Mucosa of descending colon (tissue), 3 donors: ENCODE measurements at regions of chr1 and their contacts with region 1.

Region 1: DNA sequence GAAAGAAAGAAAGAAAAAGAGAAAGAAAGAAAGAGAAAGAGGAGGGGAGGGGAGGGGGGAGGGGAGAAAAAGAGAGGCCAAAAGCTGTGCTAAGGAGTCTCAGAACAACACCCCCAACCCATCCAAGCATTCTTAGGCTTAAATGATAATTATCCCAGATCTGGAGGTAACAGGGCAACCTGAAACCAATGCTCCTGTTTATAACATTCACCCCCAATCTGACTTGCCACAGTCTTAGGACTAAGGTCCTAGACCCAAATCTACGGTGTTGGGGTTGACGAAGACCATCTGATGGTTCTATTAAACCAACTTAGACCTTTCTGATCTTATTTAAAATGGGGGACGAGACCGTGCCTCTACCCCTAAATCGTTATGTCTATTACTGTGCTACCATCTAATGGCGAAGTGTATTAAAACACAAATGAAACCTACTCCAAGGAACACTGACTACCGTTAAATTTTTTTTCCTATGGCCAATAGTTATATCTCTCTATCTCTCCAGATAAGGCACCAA is 119.3 kb upstream of the CDC42BPA start:
- DNase-seq: no peak
- ATAC-seq: peak; percentile 66
- H3K4me3 ChIP-seq: no peak overlapping the region
- H3K4me1 ChIP-seq: no peaks in the 10 kb centered on the region
- CTCF ChIP-seq: no peak

Region 2: DNA sequence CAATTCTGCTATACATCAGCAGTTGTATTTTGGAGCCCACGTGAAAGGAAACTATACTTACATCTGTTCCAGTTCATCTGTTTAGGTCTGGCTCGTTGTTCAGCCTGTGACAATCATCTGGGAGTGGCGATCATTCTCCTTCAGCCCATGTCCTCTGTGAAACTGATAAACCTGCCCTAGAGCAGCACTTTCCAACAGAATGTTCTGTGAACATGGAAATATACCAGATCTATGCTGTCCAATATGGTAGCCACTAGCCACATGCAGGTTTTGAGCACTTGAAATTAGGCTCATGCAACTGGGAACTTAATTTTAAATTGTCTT is 521.9 kb before region 1 on chr1:
- intact Hi-C with region 1: loop called in 1 of 2 experiments (anchors 5 kb)
- DNase-seq: no peak
- ATAC-seq: peak; percentile 22
- H3K4me3 ChIP-seq: no peak overlapping the region
- H3K4me1 ChIP-seq: peaks cover 4% of the 10 kb centered on the region
- CTCF ChIP-seq: no peak

Region 3: GRCh38 chr1:227996187-227996950 is 558.8 kb after region 1 on chr1:
- intact Hi-C with region 1: no loop called
- DNase-seq: no peak
- ATAC-seq: no peak
- H3K4me3 ChIP-seq: no peak overlapping the region
- H3K4me1 ChIP-seq: no peaks in the 10 kb centered on the region
- CTCF ChIP-seq: no peak